SK-N-SH (cell line): ENCODE measurements at regions of chr9 and their contacts with region 1.

Region 1: GRCh38 chr9:137029058-137029936 is 1.3 kb upstream of the ABCA2 start:
- DNase-seq: peak; percentile 90
- H3K4me3 ChIP-seq: peak overlapping the region; percentile 62 to 73; a peak in 3 of 4 replicates
- H3K27ac ChIP-seq: no peak overlapping the region; a peak in 1 of 4 replicates
- H3K4me1 ChIP-seq: peaks cover 5 to 49% of the 10 kb centered on the region in 2 experiments; a peak in 1 of 4 replicates
- H3K27me3 ChIP-seq: no peaks in the 10 kb centered on the region
- CTCF ChIP-seq: peak; percentile 94
- EP300 ChIP-seq: no peak
- RAD21 ChIP-seq: peak; percentile 56

Region 2: GRCh38 chr9:136849038-136849959 is 180.0 kb before region 1 on chr9 and contains the start of gene PHPT1:
- CTCF ChIA-PET with region 1: interaction called, 21 read pairs
- POLR2A ChIA-PET with region 1: no interaction called
- DNase-seq: peak; percentile 99
- H3K4me3 ChIP-seq: peak within 1 kb of the TSS; percentile 89 to 97
- H3K27ac ChIP-seq: peak within 1 kb of the TSS; percentile 84 to 98
- H3K4me1 ChIP-seq: peaks cover 4 to 13% of the 10 kb centered on the region in 2 experiments; a peak in 2 of 4 replicates
- H3K27me3 ChIP-seq: no peaks in the 10 kb centered on the region
- CTCF ChIP-seq: no peak
- EP300 ChIP-seq: no peak
- RAD21 ChIP-seq: no peak
- polyA plus RNA-seq, gene PHPT1: 338 and 517 TPM in 2 replicates

Region 3: GRCh38 chr9:136991993-136992818 is 37.1 kb before region 1 on chr9 and contains the start of gene PAXX:
- CTCF ChIA-PET with region 1: interaction called, 68 read pairs
- POLR2A ChIA-PET with region 1: interaction called, 3 read pairs
- DNase-seq: peak; percentile 100
- H3K4me3 ChIP-seq: peak within 1 kb of the TSS; percentile 80 to 85
- H3K27ac ChIP-seq: peak within 1 kb of the TSS in 1 of 2 experiments; percentile 56; a peak in 2 of 4 replicates
- H3K4me1 ChIP-seq: peaks cover 9 to 24% of the 10 kb centered on the region in 2 experiments; a peak in 3 of 4 replicates
- H3K27me3 ChIP-seq: no peaks in the 10 kb centered on the region
- CTCF ChIP-seq: no peak
- EP300 ChIP-seq: no peak
- RAD21 ChIP-seq: no peak
- polyA plus RNA-seq, gene PAXX: 37.8 and 52.9 TPM in 2 replicates

Region 4: GRCh38 chr9:137007108-137007815 is 22.0 kb before region 1 on chr9:
- CTCF ChIA-PET with region 1: interaction called, 16 read pairs
- POLR2A ChIA-PET with region 1: no interaction called
- DNase-seq: no peak
- H3K4me3 ChIP-seq: no peak overlapping the region
- H3K27ac ChIP-seq: no peak overlapping the region; a peak in 1 of 4 replicates
- H3K4me1 ChIP-seq: no peaks in the 10 kb centered on the region
- H3K27me3 ChIP-seq: no peaks in the 10 kb centered on the region
- CTCF ChIP-seq: no peak
- EP300 ChIP-seq: no peak
- RAD21 ChIP-seq: no peak

Region 5: GRCh38 chr9:137046098-137046787 is 16.9 kb after region 1 on chr9 and contains the start of gene NPDC1:
- CTCF ChIA-PET with region 1: interaction called, 129 read pairs
- POLR2A ChIA-PET with region 1: interaction called, 8 read pairs
- DNase-seq: peak; percentile 96
- H3K4me3 ChIP-seq: peak within 1 kb of the TSS; percentile 62 to 73
- H3K27ac ChIP-seq: peak within 1 kb of the TSS in 1 of 2 experiments; percentile 78; a peak in 2 of 4 replicates
- H3K4me1 ChIP-seq: peaks cover 11 to 25% of the 10 kb centered on the region in 2 experiments; a peak in 2 of 4 replicates
- H3K27me3 ChIP-seq: 0 out of 2 replicates have a peak, but pooled peaks cover 5% of the 10 kb centered on the region
- CTCF ChIP-seq: peak; percentile 87
- EP300 ChIP-seq: no peak
- RAD21 ChIP-seq: peak; percentile 75
- polyA plus RNA-seq, gene NPDC1: 47.4 and 48.1 TPM in 2 replicates

Region 6: DNA sequence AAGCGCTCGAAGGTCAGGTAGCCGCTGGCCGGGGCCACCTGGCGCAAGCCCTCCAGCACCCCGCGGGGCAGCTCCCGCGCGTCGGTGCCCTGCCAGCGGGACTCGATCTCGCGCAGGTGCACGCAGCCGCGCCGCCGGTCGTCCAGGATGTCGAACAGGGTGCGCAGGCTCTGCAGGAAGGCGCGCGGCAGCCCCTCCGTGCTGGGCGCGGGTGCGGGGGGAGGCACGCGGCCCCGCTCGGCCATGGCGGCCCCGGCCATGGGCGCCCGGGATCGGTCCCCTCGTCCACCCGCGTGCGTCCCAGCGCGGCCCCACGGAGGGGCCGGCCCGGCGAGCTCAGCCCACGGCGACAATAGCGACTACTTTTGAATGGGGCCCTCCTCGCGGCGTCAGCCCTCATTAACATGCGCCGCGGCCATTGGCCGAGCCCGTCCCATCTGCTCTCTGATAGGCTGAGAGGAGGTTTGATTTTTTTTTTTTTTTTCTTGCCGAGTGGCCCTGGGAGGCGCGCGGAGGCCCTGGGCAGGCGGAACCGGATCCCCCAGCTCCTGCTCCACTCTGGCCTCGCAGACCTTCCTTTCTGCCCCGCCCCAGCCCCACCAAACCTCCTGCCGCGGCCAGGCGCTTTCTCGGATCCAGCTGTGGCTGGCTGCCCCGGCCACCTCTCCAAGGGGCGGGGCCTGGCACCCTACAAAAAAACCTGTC is 41.1 kb after region 1 on chr9 and contains the start of gene SAPCD2:
- CTCF ChIA-PET with region 1: interaction called, 156 read pairs
- POLR2A ChIA-PET with region 1: interaction called, 3 read pairs
- DNase-seq: peak; percentile 95
- H3K4me3 ChIP-seq: peak within 1 kb of the TSS; percentile 53 to 57
- H3K27ac ChIP-seq: peak within 1 kb of the TSS in 1 of 2 experiments; percentile 80; a peak in 2 of 4 replicates
- H3K4me1 ChIP-seq: peaks cover 0 to 29% of the 10 kb centered on the region in 2 experiments; a peak in 1 of 4 replicates
- H3K27me3 ChIP-seq: no peaks in the 10 kb centered on the region
- CTCF ChIP-seq: no peak
- EP300 ChIP-seq: no peak
- RAD21 ChIP-seq: no peak
- polyA plus RNA-seq, gene SAPCD2: 4.6 and 6.0 TPM in 2 replicates

Region 7: DNA sequence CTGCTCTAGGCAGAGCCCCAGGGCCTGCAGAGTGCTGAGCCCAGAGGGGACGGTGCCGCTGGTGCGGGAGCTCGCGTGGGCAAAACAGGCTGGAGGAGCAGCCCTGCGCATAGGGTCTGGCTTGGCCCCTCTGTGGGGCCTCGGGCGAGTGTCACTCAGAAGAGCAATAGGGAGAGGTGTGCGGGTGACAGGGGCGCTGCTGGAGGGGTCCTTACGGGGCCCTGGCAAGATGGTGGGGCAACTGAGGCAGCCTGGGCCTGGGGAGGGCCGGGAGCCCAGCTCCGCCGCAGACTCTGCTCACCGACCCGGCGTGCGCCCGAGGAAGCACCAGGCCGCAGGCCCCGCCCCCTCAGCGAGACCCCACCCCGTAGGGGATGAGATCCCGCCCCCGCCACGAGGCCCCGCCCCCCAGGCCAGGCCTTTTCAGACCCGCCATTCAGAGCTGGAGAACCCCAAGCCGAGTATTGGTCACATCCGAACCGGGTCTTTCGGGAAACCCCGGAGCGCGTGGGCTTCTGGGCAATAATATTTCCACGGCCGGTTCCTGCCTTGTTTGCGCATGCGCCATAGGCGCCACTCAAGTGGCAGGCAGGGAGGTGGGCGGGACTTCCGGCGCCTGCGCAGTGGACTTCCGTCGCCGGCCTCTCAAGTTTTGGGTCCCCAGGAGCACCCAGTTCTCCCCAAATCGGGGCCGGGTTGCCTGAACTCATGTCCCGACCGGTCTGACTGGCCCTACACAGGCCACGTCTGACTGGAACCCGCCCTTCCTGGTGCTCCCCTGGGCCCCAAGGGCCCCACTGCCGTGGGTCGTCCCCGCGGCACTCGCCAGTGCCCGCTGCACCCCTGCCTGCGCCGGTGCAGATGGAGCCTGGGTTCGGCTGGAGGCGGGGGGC is 194.0 kb after region 1 on chr9:
- CTCF ChIA-PET with region 1: interaction called, 12 read pairs
- POLR2A ChIA-PET with region 1: no interaction called
- DNase-seq: peak; percentile 99
- H3K4me3 ChIP-seq: peak overlapping the region; percentile 69 to 92
- H3K27ac ChIP-seq: peak overlapping the region; percentile 75 to 86
- H3K4me1 ChIP-seq: peaks cover 5 to 41% of the 10 kb centered on the region in 2 experiments; a peak in 1 of 4 replicates
- H3K27me3 ChIP-seq: no peaks in the 10 kb centered on the region
- CTCF ChIP-seq: no peak
- EP300 ChIP-seq: no peak
- RAD21 ChIP-seq: no peak